Natural killer cell (primary cell): ENCODE measurements at regions of chr4 and their contacts with region 1.

Region 1: DNA sequence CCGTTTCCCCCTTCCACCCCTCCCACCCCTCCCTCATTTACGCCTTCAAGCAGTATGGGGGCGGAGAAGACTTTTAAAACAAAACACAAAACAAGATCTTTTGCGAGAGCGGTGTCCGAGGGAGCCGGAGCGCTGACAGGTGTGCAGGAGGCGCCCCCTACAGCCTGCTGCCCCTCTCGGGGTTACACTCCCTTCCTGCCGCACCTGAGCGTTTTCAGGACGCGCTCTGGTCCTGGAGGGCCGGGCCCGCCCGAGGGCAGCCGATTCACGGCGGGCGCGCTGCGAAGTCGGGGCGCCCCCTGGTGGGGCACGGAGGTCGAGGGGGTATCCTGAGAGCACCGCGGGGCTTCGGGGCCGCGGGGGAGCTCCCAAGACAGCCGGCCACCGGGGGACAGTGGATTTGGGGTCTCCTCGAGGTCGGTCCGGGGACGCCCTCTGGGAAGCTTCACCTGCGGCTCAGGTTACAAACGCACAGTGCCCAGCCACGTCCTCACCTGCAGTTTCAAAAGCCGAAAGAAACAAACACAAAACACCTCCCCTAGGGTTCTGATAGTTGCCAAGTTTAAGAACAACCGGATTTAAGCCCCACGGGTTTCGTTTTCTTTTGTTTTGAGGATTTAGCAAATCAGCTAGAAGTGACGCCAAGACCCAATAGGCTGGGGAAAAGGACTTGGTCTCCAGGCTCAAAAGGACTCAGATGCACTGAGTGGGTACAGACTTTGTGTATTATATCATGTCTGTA is 8.0 kb upstream of the NEUROG2 start:
- DNase-seq: peak; percentile 58 to 81
- ATAC-seq: peak; percentile 85 to 91 (median 87)
- H3K4me3 ChIP-seq: peak overlapping the region; percentile 9
- H3K4me3 Mint-ChIP-seq: peak overlapping the region; percentile 93
- H3K27ac ChIP-seq: no peak overlapping the region
- H3K27ac Mint-ChIP-seq: no peak overlapping the region
- H3K4me1 ChIP-seq: peaks cover 33% of the 10 kb centered on the region
- H3K4me1 Mint-ChIP-seq: peaks cover 14 to 26% of the 10 kb centered on the region in 2 donors
- H3K27me3 ChIP-seq: peaks cover 44% of the 10 kb centered on the region
- H3K27me3 Mint-ChIP-seq: peaks cover 48 to 72% of the 10 kb centered on the region in 2 donors
- CTCF ChIP-seq: peak; percentile 75

Region 2: GRCh38 chr4:112099701-112100297 is 424.1 kb before region 1 on chr4:
- intact Hi-C with region 1: loop called (anchors 1 kb)
- DNase-seq: peak in 1 of 2 donors; percentile 69
- ATAC-seq: peak in 2 of 3 donors; percentile 50 to 64
- H3K4me3 ChIP-seq: no peak overlapping the region
- H3K4me3 Mint-ChIP-seq: no peak overlapping the region
- H3K27ac ChIP-seq: no peak overlapping the region
- H3K27ac Mint-ChIP-seq: no peak overlapping the region
- H3K4me1 ChIP-seq: no peaks in the 10 kb centered on the region
- H3K4me1 Mint-ChIP-seq: peaks cover 0 to 7% of the 10 kb centered on the region in 2 donors
- H3K27me3 ChIP-seq: no peaks in the 10 kb centered on the region
- H3K27me3 Mint-ChIP-seq: peaks cover 16 to 22% of the 10 kb centered on the region in 2 donors
- CTCF ChIP-seq: peak; percentile 75

Region 3: GRCh38 chr4:112714922-112715901 is 191.3 kb after region 1 on chr4:
- intact Hi-C with region 1: no loop called
- DNase-seq: no peak
- ATAC-seq: no peak
- H3K4me3 ChIP-seq: no peak overlapping the region
- H3K4me3 Mint-ChIP-seq: no peak overlapping the region
- H3K27ac ChIP-seq: no peak overlapping the region
- H3K27ac Mint-ChIP-seq: no peak overlapping the region
- H3K4me1 ChIP-seq: no peaks in the 10 kb centered on the region
- H3K4me1 Mint-ChIP-seq: no peaks in the 10 kb centered on the region
- H3K27me3 ChIP-seq: no peaks in the 10 kb centered on the region
- H3K27me3 Mint-ChIP-seq: peaks cover 7 to 9% of the 10 kb centered on the region in 2 donors
- CTCF ChIP-seq: no peak